Colonic mucosa (tissue), 4 donors: ENCODE measurements at regions of chr20 and their contacts with region 1.

Region 1: GRCh38 chr20:59141787-59142581 is 21.6 kb upstream of the ZNF831 start:
- DNase-seq: no peak
- H3K4me3 ChIP-seq: no peak overlapping the region
- H3K27ac ChIP-seq: no peak overlapping the region
- H3K4me1 ChIP-seq: no peaks in the 10 kb centered on the region
- H3K27me3 ChIP-seq: no peaks in the 10 kb centered on the region
- CTCF ChIP-seq: no peak

Region 2: GRCh38 chr20:58980700-58981627 is 161.0 kb before region 1 on chr20 and contains the start of gene NELFCD:
- intact Hi-C with region 1: no loop called
- DNase-seq: peak; percentile 92
- H3K4me3 ChIP-seq: peak within 1 kb of the TSS; percentile 58
- H3K27ac ChIP-seq: peak within 1 kb of the TSS; percentile 62
- H3K4me1 ChIP-seq: no peaks in the 10 kb centered on the region
- H3K27me3 ChIP-seq: no peaks in the 10 kb centered on the region
- CTCF ChIP-seq: no peak
- total RNA-seq, gene NELFCD: 47.1 to 64.4 TPM

Region 3: GRCh38 chr20:59177261-59178250 is 35.6 kb after region 1 on chr20:
- intact Hi-C with region 1: loop called (anchors 5 kb)
- DNase-seq: peak; percentile 14
- H3K4me3 ChIP-seq: no peak overlapping the region
- H3K27ac ChIP-seq: no peak overlapping the region
- H3K4me1 ChIP-seq: no peaks in the 10 kb centered on the region
- H3K27me3 ChIP-seq: no peaks in the 10 kb centered on the region
- CTCF ChIP-seq: no peak